ENCODE measurements at regions of chr19 and their contacts with region 1.

Region 1: GRCh38 chr19:45439569-45440254 is 16.0 kb upstream of the ERCC1 start:
- DNase-seq: peak in 1 of 2 experiments; percentile 95
- H3K4me3 ChIP-seq: peak overlapping the region; percentile 41 to 95 (median 73)
- H3K27ac ChIP-seq: peak overlapping the region; percentile 23; the same call in 1 of the 2 replicates
- H3K4me1 ChIP-seq: peaks cover 4 to 16% (median 11%) of the 10 kb centered on the region in 4 experiments
- H3K27me3 ChIP-seq: peaks cover 0 to 5% (median 2%) of the 10 kb centered on the region in 4 experiments; a peak in 3 of 7 replicates
- CTCF ChIP-seq: peak; percentile 75 to 90 (median 89)
- EP300 ChIP-seq: no peak
- POLR2A ChIP-seq: peak in 1 of 2 experiments; percentile 8; a peak in 1 of 3 replicates
- RAD21 ChIP-seq: peak; percentile 75 to 77

Region 2: DNA sequence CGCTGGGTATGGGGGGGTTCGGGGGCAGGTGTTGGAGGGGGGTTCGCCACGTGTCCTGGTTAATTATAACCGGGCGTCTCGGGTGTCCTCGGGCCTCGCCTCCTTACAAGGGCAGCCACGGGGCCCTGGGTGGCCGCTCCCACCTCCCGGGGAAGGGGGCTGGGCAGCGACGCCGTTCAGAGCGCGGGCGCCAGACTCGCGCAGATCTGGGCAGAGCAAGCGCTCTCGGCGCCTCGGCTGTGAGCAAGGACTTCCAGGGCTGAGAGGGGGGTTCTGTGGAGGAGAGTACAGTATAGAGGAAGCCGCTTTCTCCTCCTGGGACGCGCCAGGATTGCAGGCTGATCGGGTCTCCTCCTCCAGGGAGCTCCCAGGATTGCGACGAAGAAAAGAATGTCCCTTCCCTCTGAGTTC is 116.0 kb before region 1 on chr19:
- CTCF ChIA-PET with region 1: no interaction called
- POLR2A ChIA-PET with region 1: no interaction called
- DNase-seq: peak in 1 of 2 experiments; percentile 68
- H3K4me3 ChIP-seq: peak overlapping the region in 3 of 4 experiments; percentile 1 to 52 (median 26); a peak in 5 of 8 replicates
- H3K27ac ChIP-seq: no peak overlapping the region
- H3K4me1 ChIP-seq: peaks cover 2 to 18% (median 6%) of the 10 kb centered on the region in 4 experiments; a peak in 6 of 7 replicates
- H3K27me3 ChIP-seq: peaks cover 0 to 14% (median 11%) of the 10 kb centered on the region in 4 experiments; a peak in 5 of 7 replicates
- CTCF ChIP-seq: no peak
- EP300 ChIP-seq: no peak
- POLR2A ChIP-seq: peak in 1 of 2 experiments; percentile 58; a peak in 1 of 3 replicates
- RAD21 ChIP-seq: no peak

Region 3: GRCh38 chr19:45340232-45340898 is 99.3 kb before region 1 on chr19 and contains the start of gene KLC3:
- CTCF ChIA-PET with region 1: no interaction called
- POLR2A ChIA-PET with region 1: no interaction called
- DNase-seq: peak in 1 of 2 experiments; percentile 90
- H3K4me3 ChIP-seq: peak within 1 kb of the TSS; percentile 28 to 70 (median 36)
- H3K27ac ChIP-seq: no peak within 1 kb of the TSS
- H3K4me1 ChIP-seq: peaks cover 0 to 3% (median 0%) of the 10 kb centered on the region in 4 experiments; a peak in 4 of 7 replicates
- H3K27me3 ChIP-seq: peaks cover 4 to 16% (median 13%) of the 10 kb centered on the region in 4 experiments; a peak in 6 of 7 replicates
- CTCF ChIP-seq: no peak
- EP300 ChIP-seq: no peak
- POLR2A ChIP-seq: no peak
- RAD21 ChIP-seq: no peak
- total RNA-seq, gene KLC3: 2.8 and 3.2 TPM in 2 replicates

Region 4: DNA sequence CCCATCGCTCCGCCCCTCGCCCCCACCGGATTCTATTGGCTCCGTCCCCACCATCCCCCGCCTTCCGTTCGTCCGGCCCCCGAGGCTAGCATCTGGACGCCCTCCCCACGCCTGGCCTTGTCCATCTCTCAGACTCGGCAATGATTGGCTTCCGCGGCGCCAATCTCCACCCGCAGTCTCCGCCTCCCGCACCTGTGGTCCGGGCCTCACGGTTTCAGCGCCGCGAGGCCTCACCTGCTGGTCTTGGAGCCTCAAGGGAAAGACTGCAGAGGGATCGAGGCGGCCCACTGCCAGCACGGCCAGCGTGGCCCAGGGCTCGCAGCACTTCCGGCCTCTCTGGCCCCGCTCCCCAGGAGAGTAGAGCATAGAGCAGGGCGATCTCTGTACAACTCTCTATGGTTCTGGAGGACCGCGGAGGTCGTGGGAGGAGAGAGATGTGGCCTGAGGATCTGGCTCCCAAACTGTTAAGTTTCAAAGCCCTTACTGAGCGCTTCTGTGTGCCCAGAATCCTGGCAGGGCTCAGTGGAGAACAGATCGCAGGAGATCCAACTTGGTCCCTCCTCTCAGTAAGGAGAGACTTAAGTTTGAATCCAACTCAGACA is 16.0 kb before region 1 on chr19 and contains the start of gene ERCC1:
- CTCF ChIA-PET with region 1: interaction called, 17 read pairs
- POLR2A ChIA-PET with region 1: interaction called, 3 read pairs
- DNase-seq: peak; percentile 98 to 99
- H3K4me3 ChIP-seq: peak within 1 kb of the TSS; percentile 52 to 67 (median 64)
- H3K27ac ChIP-seq: peak within 1 kb of the TSS; percentile 76
- H3K4me1 ChIP-seq: peaks cover 0 to 11% (median 6%) of the 10 kb centered on the region in 4 experiments; a peak in 6 of 7 replicates
- H3K27me3 ChIP-seq: no peaks in the 10 kb centered on the region
- CTCF ChIP-seq: no peak
- EP300 ChIP-seq: no peak; a peak in 1 of 3 replicates
- POLR2A ChIP-seq: peak; percentile 62 to 67; a peak in 2 of 3 replicates
- RAD21 ChIP-seq: no peak
- total RNA-seq, gene ERCC1: 44.7 and 46.4 TPM in 2 replicates

Region 5: DNA sequence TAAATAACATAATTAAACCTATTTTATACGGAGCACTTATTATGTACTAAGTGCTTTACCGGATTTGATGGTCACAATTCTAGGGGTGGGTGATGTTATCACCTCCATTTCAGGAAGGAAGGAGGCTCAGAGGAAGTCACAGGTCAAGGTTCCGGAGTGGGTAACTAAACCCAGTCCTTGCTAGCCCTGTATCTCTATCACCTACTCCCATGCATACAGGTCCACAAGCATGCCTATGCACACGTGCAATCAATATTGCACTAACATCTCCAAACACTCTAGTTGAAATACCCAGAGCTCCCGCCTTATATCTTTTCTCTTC is 10.3 kb after region 1 on chr19:
- CTCF ChIA-PET with region 1: interaction called, 24 read pairs
- POLR2A ChIA-PET with region 1: interaction called, 5 read pairs
- DNase-seq: no peak
- H3K4me3 ChIP-seq: peak overlapping the region; percentile 47 to 69 (median 52); a peak in 7 of 8 replicates
- H3K27ac ChIP-seq: no peak overlapping the region
- H3K4me1 ChIP-seq: peaks cover 0 to 7% (median 4%) of the 10 kb centered on the region in 4 experiments; a peak in 4 of 7 replicates
- H3K27me3 ChIP-seq: peaks cover 0 to 19% (median 14%) of the 10 kb centered on the region in 4 experiments; a peak in 6 of 7 replicates
- CTCF ChIP-seq: no peak
- EP300 ChIP-seq: no peak
- POLR2A ChIP-seq: no peak
- RAD21 ChIP-seq: no peak

Region 6: DNA sequence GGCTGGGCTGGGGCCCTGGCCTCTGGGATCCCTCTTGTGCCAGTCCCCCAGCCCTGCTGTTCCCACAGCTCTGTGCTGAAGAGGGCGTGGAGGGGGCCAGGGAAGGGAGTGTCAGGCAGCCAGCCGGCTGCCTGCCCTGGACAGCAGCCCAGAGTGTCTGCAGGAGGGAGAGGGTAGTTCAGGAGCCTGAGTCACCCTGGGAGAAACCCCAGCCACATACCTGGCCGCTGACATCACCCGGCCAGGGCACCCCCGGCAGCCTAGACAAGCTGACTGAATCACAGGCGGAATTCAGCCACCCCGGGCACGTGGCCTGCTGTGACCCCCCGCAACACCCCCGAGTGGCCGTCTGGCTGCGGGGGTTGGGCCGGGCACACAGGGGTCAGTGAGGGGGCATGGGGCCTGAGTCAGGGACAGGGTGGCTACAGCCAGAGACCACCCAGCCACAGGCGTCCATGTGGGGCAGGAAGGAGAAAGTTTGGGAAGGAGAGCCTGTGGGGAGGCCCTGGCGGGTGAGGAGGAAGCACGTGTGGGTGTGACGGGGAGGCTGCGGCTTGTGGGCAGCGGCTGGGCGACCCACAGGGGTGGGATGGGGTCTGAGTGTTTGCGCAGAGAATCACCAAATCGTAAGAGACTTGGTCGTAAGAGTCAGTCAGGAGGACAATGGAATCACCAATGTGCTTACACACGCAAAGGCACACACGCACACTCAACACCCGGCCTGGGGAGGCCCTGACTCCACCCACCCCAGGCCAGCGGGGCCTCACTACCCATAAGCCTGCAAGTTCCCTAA is 16.2 kb after region 1 on chr19:
- CTCF ChIA-PET with region 1: interaction called, 760 read pairs
- POLR2A ChIA-PET with region 1: interaction called, 5 read pairs
- DNase-seq: peak in 1 of 2 experiments; percentile 85
- H3K4me3 ChIP-seq: 0 out of 8 replicates have a peak overlapping the region, but pooled peaks of 1 of the 4 experiments have one; percentile 7
- H3K27ac ChIP-seq: peak overlapping the region; percentile 48; the same call in 1 of the 2 replicates
- H3K4me1 ChIP-seq: peaks cover 0 to 15% (median 8%) of the 10 kb centered on the region in 4 experiments; a peak in 5 of 7 replicates
- H3K27me3 ChIP-seq: peaks cover 0 to 13% (median 12%) of the 10 kb centered on the region in 4 experiments; a peak in 6 of 7 replicates
- CTCF ChIP-seq: no peak
- EP300 ChIP-seq: peak in 1 of 2 experiments; percentile 50; a peak in 1 of 3 replicates
- POLR2A ChIP-seq: peak in 1 of 2 experiments; percentile 68; a peak in 2 of 3 replicates
- RAD21 ChIP-seq: peak in 1 of 2 experiments; percentile 13; a peak in 1 of 4 replicates

Region 7: DNA sequence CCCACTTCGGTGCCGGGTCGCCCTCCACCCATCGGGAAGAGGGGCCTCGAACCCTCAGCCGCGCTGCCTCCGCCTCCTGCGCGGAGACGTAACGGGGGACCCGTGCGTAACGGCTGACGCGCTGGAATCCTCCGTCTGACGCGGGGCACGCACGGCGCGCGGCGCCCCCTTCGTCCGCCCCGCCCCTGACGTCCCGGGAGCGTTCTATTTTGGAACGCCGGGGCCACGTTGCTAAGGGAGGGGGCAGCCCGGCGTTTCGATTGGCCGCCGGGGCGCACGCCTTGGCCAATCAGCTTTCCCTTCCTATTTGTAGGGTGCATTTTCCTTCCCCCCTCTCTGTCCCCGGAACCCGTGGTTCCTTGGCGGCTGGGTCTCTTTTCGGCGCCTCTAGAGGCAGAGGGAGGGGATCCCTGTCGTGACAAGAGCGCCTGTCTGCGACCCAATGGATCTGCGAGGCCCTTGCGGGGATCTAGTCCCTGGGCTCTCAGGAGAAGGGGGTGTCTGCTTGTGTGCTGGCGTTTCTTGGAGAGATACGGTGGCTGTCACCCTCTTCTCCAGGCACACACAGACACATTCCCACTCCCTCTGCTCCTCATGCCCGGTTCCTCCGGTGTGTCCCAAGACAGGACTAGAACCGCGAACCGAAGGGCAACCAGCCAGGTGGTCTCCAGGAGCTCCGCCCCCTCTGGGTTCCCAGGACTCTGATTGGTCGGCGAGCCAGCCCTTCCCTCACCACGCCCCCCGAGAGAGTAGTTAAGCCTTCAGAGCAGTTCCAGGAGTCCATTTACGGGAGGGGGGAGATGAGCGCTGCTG is 29.6 kb after region 1 on chr19:
- CTCF ChIA-PET with region 1: interaction called, 760 read pairs
- POLR2A ChIA-PET with region 1: interaction called, 34 read pairs
- DNase-seq: peak in 1 of 2 experiments; percentile 95
- H3K4me3 ChIP-seq: peak overlapping the region; percentile 48 to 95 (median 78)
- H3K27ac ChIP-seq: peak overlapping the region; percentile 87
- H3K4me1 ChIP-seq: peaks cover 0 to 22% (median 14%) of the 10 kb centered on the region in 4 experiments; a peak in 6 of 7 replicates
- H3K27me3 ChIP-seq: peaks cover 0 to 19% (median 17%) of the 10 kb centered on the region in 4 experiments; a peak in 4 of 7 replicates
- CTCF ChIP-seq: no peak
- EP300 ChIP-seq: peak in 1 of 2 experiments; percentile 73; a peak in 1 of 3 replicates
- POLR2A ChIP-seq: peak; percentile 71 to 87
- RAD21 ChIP-seq: no peak

Region 8: DNA sequence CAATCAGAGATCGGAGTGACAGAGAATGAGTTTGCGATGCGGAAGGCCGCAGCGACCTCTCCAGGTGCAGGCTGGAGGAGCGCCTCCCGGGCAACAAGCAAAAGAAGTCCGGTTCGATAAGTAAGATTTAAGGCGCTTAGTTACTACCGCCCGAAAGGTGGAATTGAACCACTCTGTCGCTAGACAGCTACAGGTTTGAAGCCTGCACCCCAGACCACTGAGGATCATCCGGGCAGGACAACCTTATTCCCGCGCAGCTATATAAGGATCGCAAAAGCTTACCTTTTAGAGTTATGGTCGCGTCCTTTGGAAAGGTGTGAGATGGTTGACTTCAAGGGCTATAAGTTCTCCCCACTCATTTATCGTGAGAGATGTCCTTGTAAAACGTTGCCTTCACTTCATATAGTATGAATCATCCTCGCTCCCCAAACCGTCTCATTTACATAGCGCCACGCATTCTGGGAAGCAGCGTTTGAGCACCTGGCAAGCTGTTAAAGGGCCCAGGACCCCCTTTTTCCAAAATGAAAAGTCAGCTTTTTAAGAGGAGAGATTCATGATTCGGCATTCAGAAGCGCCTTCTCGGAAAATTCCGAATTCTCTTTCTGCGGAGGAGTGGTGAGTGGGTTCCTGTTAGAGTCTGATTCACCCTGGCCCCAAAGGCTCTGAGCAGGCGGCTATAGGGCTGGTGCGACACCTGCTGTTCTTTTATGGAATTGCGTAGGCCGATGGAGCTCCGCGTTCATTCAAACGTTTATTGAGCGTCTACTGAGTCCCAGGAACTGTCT is 38.9 kb after region 1 on chr19:
- CTCF ChIA-PET with region 1: interaction called, 760 read pairs
- POLR2A ChIA-PET with region 1: interaction called, 33 read pairs
- DNase-seq: peak in 1 of 2 experiments; percentile 94
- H3K4me3 ChIP-seq: peak overlapping the region; percentile 44 to 82 (median 75); a peak in 7 of 8 replicates
- H3K27ac ChIP-seq: peak overlapping the region; percentile 97
- H3K4me1 ChIP-seq: peaks cover 2 to 5% (median 3%) of the 10 kb centered on the region in 4 experiments
- H3K27me3 ChIP-seq: no peaks in the 10 kb centered on the region; a peak in 2 of 7 replicates
- CTCF ChIP-seq: peak; percentile 87 to 93 (median 91)
- EP300 ChIP-seq: no peak
- POLR2A ChIP-seq: peak in 1 of 2 experiments; percentile 71; a peak in 2 of 3 replicates
- RAD21 ChIP-seq: peak; percentile 90

Region 9: DNA sequence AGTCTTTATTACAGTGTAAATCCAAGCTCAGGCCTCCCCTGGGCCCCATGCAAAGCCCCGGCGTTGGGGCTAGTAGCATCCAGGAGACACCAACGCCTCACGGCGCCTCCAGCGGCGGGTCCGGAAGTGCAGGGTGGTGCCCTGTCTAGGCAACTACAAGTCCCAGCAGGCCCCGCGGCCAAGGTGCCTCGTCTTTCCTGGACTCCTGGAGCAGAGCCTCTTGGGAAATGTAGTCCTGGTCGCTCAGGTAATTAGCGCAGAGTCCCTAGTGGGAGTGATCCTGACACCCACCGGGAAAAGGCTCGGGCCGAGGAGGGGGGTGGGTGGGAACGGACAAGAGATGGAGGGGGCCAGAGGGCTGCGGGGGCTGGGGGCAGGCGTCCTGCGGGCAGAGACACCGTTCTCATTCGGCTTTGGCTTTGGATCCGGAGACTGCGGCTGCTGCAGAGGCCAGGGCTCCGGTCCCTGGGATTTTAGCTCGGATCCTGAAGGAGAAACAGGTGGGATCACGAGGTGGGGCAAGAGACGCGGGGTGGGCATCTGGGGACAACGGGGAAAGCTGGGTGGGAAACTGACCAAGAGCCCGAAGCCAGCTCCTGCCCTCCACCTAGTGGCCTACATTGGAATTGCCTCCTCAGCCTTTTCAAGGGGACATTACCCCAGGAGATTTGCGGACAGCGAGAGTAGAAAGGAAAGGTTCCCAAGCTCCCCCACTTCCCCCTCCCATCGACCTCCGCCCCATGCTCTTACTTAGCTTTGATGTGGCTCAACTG is 45.8 kb after region 1 on chr19:
- CTCF ChIA-PET with region 1: interaction called, 760 read pairs
- POLR2A ChIA-PET with region 1: interaction called, 33 read pairs
- DNase-seq: peak in 1 of 2 experiments; percentile 100
- H3K4me3 ChIP-seq: peak overlapping the region; percentile 32 to 69 (median 52)
- H3K27ac ChIP-seq: no peak overlapping the region; the same call in 1 of the 2 replicates
- H3K4me1 ChIP-seq: peaks cover 0 to 3% (median 0%) of the 10 kb centered on the region in 4 experiments; a peak in 1 of 7 replicates
- H3K27me3 ChIP-seq: no peaks in the 10 kb centered on the region
- CTCF ChIP-seq: peak; percentile 86 to 95 (median 92)
- EP300 ChIP-seq: no peak
- POLR2A ChIP-seq: no peak
- RAD21 ChIP-seq: peak; percentile 59 to 66

Region 10: DNA sequence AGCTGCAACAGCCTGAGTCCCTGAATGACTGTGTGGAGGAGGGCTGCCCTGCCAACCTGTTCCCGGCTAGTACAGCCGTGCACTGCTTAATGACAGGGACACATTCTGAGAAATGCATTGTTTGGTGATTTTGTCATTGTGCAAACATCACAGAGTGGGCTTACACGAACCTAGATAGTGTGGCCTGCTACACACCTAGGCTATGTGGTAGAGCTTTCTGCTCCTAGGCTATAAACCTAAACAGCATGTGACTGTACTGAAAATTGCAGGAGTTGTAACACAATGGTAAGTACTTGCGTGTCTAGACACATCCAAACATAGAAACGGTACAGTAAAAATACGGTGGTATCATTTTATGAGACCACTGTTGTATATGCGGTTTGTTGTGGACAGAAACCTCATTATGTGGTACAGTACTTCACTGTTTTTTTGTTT is 102.5 kb after region 1 on chr19:
- CTCF ChIA-PET with region 1: no interaction called
- POLR2A ChIA-PET with region 1: no interaction called
- DNase-seq: no peak
- H3K4me3 ChIP-seq: no peak overlapping the region
- H3K27ac ChIP-seq: no peak overlapping the region
- H3K4me1 ChIP-seq: no peaks in the 10 kb centered on the region
- H3K27me3 ChIP-seq: no peaks in the 10 kb centered on the region
- CTCF ChIP-seq: no peak
- EP300 ChIP-seq: no peak
- POLR2A ChIP-seq: no peak
- RAD21 ChIP-seq: no peak

Measured in H1 (cell line).